HCT116 (cell line): ENCODE measurements at regions of chr1 and their contacts with region 1.

Region 1: GRCh38 chr1:8913111-8913856 is 32.4 kb upstream of the CA6 start:
- DNase-seq: no peak
- ATAC-seq: no peak
- H3K4me3 ChIP-seq: no peak overlapping the region
- H3K27ac ChIP-seq: no peak overlapping the region
- H3K4me1 ChIP-seq: peaks cover 0 to 4% of the 10 kb centered on the region in 2 experiments; a peak in 2 of 4 replicates
- H3K27me3 ChIP-seq: no peaks in the 10 kb centered on the region; the same call in 1 of the 2 replicates
- CTCF ChIP-seq: no peak
- POLR2A ChIP-seq: no peak
- RAD21 ChIP-seq: no peak

Region 2: GRCh38 chr1:8987881-8988617 is 74.8 kb after region 1 on chr1:
- CTCF ChIA-PET with region 1: interaction called, 14 read pairs
- POLR2A ChIA-PET with region 1: no interaction called
- RAD21 ChIA-PET with region 1: interaction called in 1 of 2 experiments, 4 read pairs
- intact Hi-C with region 1: loop called (anchors 1 kb)
- DNase-seq: no peak
- ATAC-seq: peak; percentile 82
- H3K4me3 ChIP-seq: no peak overlapping the region
- H3K27ac ChIP-seq: no peak overlapping the region
- H3K4me1 ChIP-seq: peaks cover 13 to 35% of the 10 kb centered on the region in 2 experiments
- H3K27me3 ChIP-seq: no peaks in the 10 kb centered on the region
- CTCF ChIP-seq: peak; percentile 81 to 98 (median 91)
- POLR2A ChIP-seq: no peak
- RAD21 ChIP-seq: peak; percentile 85

Region 3: GRCh38 chr1:9101510-9102146 is 188.3 kb after region 1 on chr1:
- CTCF ChIA-PET with region 1: interaction called, 10 read pairs
- POLR2A ChIA-PET with region 1: no interaction called
- RAD21 ChIA-PET with region 1: no interaction called
- intact Hi-C with region 1: loop called (anchors 1 kb)
- DNase-seq: peak; percentile 19
- ATAC-seq: peak; percentile 96
- H3K4me3 ChIP-seq: no peak overlapping the region
- H3K27ac ChIP-seq: no peak overlapping the region
- H3K4me1 ChIP-seq: no peaks in the 10 kb centered on the region
- H3K27me3 ChIP-seq: no peaks in the 10 kb centered on the region
- CTCF ChIP-seq: peak; percentile 67 to 80 (median 70); a peak in 5 of 6 replicates
- POLR2A ChIP-seq: no peak
- RAD21 ChIP-seq: peak; percentile 86

Region 4: GRCh38 chr1:9196129-9197040 is 283.1 kb after region 1 on chr1:
- CTCF ChIA-PET with region 1: no interaction called
- POLR2A ChIA-PET with region 1: no interaction called
- RAD21 ChIA-PET with region 1: no interaction called
- intact Hi-C with region 1: loop called (anchors 5 kb)
- DNase-seq: no peak
- ATAC-seq: peak; percentile 83
- H3K4me3 ChIP-seq: no peak overlapping the region
- H3K27ac ChIP-seq: no peak overlapping the region
- H3K4me1 ChIP-seq: peaks cover 2 to 18% of the 10 kb centered on the region in 2 experiments; a peak in 2 of 4 replicates
- H3K27me3 ChIP-seq: peaks cover 19% of the 10 kb centered on the region; the same call in 1 of the 2 replicates
- CTCF ChIP-seq: peak; percentile 78 to 95 (median 84)
- POLR2A ChIP-seq: no peak
- RAD21 ChIP-seq: peak; percentile 98